Endothelial cell of umbilical vein (primary cell): ENCODE measurements at regions of chr3 and their contacts with region 1.

Region 1: DNA sequence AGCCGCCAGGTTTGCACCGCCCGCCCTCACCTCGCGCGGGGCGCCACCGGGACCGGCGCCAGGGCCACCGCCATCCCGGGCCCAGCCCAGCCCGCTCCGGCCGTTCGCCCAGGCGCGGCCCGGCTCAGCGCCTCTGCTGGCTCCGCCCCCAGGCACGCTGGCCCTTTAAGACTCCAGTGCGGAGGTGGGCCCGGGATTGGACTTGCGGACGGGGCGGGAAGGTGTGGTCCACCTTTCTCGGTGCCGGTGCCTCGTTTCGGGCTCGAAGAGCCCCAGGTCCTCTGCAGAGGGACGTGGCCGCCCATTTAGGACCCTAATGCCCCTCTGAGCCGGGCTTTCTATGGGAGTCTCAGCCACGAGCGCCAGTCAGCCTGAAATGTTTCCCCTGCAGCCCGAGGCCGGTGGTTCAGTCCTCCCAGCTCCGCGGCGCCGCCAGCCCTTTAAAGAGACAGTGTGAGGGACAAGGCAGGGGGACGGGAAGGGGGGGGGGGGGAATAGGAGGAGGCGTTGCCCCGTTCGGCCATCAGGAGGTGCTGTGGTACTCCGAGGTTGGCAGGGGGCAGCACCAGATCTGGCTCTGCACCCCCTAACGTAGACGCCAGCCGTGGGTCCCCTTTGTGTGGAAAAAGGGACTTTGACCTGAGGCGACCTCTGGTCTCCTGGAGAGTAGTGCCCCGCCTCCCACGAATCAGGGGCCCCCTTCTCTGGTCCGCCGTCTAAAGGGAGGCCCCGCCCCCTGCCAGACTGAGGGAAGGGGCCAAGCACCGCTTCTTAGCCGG is 1.0 kb downstream of the HYAL2 start:
- DNase-seq: peak; percentile 91
- H3K4me3 ChIP-seq: peak overlapping the region; percentile 65 to 89 (median 89)
- H3K27ac ChIP-seq: peak overlapping the region; percentile 99
- H3K4me1 ChIP-seq: peaks cover 63% of the 10 kb centered on the region
- H3K27me3 ChIP-seq: no peaks in the 10 kb centered on the region
- CTCF ChIP-seq: peak; percentile 41 to 82
- POLR2A ChIP-seq: no peak

Region 2: GRCh38 chr3:50163572-50164455 is 157.7 kb before region 1 on chr3:
- CTCF ChIA-PET with region 1: interaction called, 3 read pairs
- POLR2A ChIA-PET with region 1: no interaction called
- dilution Hi-C with region 1: no loop called
- intact Hi-C with region 1: loop called (anchors 2 kb)
- DNase-seq: peak; percentile 75
- H3K4me3 ChIP-seq: no peak overlapping the region
- H3K27ac ChIP-seq: peak overlapping the region; percentile 45
- H3K4me1 ChIP-seq: peaks cover 98% of the 10 kb centered on the region
- H3K27me3 ChIP-seq: no peaks in the 10 kb centered on the region
- CTCF ChIP-seq: no peak
- POLR2A ChIP-seq: peak; percentile 52

Region 3: DNA sequence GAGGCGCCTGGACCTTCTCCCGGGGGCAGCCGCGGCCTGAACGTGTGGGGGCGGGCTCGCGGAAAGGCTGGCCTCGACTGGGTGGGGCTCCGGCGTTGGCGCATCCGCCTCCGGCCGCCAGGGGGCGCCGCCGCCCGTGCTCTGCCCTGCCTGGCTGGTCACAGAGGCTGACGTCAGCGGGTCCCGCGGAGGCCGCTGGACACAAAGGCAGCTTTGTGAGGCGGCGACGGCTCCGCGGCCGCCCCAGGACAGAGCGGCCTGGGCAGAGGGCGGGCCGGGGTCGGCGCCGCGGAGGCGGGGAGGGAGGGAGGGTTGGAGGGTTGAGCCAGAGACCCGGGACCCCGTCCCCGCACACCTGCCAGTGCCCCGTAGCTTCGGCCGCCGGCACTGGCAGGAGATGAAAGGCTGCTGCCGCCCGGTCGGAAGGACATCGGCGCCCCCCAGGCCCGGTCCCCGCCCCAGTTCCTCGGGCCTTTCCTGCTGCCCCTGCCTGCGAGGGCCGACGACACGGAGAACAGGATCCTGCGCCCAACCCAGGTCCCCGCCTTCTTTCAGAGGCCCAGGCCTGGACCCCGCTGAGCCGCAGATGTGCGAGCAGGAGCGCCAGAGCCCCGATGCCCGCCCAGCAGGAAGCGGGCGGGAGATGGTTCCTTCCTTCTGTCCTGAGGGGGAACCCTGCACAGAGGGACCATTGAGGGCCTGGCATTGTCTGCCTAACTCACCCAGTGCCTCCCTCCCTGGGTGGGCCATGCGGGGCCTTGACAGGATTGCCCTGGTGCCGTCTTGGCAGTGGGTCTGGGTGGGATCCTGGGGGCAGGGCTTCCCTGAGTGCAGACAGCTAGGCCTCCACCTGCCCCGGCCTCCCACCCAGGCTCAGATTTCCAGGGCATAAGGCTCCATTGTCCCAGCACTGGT is 61.2 kb before region 1 on chr3:
- CTCF ChIA-PET with region 1: interaction called, 13 read pairs
- POLR2A ChIA-PET with region 1: interaction called, 7 read pairs
- dilution Hi-C with region 1: no loop called
- intact Hi-C with region 1: no loop called
- DNase-seq: peak; percentile 93
- H3K4me3 ChIP-seq: peak overlapping the region in 2 of 3 experiments; percentile 25 to 31
- H3K27ac ChIP-seq: peak overlapping the region; percentile 88
- H3K4me1 ChIP-seq: peaks cover 28% of the 10 kb centered on the region
- H3K27me3 ChIP-seq: no peaks in the 10 kb centered on the region
- CTCF ChIP-seq: peak; percentile 97 to 99
- POLR2A ChIP-seq: peak; percentile 88

Region 4: GRCh38 chr3:50292159-50293078 is 29.1 kb before region 1 on chr3 and contains the start of gene IFRD2:
- CTCF ChIA-PET with region 1: interaction called, 18 read pairs
- POLR2A ChIA-PET with region 1: no interaction called
- dilution Hi-C with region 1: no loop called
- intact Hi-C with region 1: loop called (anchors 1 kb)
- DNase-seq: peak; percentile 98
- H3K4me3 ChIP-seq: peak within 1 kb of the TSS; percentile 70 to 84 (median 76)
- H3K27ac ChIP-seq: peak within 1 kb of the TSS; percentile 53
- H3K4me1 ChIP-seq: peaks cover 11% of the 10 kb centered on the region
- H3K27me3 ChIP-seq: no peaks in the 10 kb centered on the region
- CTCF ChIP-seq: peak in 1 of 2 donors; percentile 6
- POLR2A ChIP-seq: peak; percentile 81
- total RNA-seq, gene IFRD2: 109 and 111 TPM in 2 replicates

Region 5: DNA sequence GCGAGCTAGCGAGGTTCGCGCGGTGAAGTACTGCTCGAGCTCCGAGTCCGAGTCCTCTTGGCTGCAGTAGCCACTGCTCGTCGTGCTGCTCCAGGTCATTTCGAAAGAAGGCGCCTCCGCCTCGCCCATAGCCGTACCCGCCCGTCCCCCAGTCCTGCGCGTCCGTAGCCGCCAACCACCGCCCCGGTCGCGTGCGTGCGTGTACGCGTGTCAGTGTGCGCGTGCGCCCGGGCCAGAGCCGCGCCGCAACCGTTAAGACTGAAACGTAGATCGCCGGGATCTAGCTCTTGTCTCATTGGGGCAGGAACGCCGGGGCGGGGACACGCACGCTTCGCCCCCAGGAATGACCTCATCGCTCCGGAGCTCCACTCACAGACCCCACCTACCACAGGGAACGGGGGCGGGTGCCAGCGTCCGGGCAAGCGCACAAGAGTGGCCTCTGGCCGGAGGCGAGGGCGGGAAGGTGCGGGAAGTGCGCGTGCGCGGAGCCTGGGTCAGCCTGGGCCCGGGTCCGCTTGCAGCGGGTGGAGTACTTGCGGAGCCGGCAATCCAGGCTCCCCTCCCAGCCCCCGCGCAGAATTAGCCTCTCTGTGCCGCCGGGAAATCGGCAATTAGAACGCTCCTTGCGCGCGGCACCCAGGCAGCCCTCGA is 15.8 kb after region 1 on chr3:
- CTCF ChIA-PET with region 1: interaction called, 66 read pairs
- POLR2A ChIA-PET with region 1: interaction called, 38 read pairs
- dilution Hi-C with region 1: no loop called
- intact Hi-C with region 1: loop called (anchors 1 kb)
- DNase-seq: peak; percentile 99
- H3K4me3 ChIP-seq: peak overlapping the region; percentile 85 to 93 (median 90)
- H3K27ac ChIP-seq: peak overlapping the region; percentile 95
- H3K4me1 ChIP-seq: peaks cover 43% of the 10 kb centered on the region
- H3K27me3 ChIP-seq: no peaks in the 10 kb centered on the region
- CTCF ChIP-seq: no peak
- POLR2A ChIP-seq: peak; percentile 63

Region 6: DNA sequence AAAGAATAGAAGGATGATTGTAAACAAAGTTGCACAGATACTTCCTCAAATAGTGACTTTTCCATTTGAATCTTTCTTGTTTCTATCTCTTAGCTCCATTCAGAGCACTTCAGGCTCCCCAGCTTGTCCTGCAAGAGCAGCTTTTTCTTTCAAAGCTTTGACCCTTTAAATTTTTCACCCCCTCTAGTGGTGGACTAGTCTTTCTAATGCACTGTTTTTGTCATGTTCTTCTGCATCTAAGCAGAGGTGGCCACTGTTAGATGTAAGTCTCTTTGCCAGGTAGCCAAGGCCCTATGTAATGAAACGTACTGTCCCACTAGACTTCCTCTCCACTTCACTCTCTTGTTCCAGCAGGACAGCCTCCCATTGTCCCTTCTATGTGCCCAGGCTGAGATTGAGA is 989.5 kb after region 1 on chr3:
- CTCF ChIA-PET with region 1: no interaction called
- POLR2A ChIA-PET with region 1: no interaction called
- dilution Hi-C with region 1: no loop called
- intact Hi-C with region 1: no loop called
- DNase-seq: peak; percentile 31
- H3K4me3 ChIP-seq: no peak overlapping the region
- H3K27ac ChIP-seq: no peak overlapping the region
- H3K4me1 ChIP-seq: no peaks in the 10 kb centered on the region
- H3K27me3 ChIP-seq: no peaks in the 10 kb centered on the region
- CTCF ChIP-seq: peak in 1 of 2 donors; percentile 32
- POLR2A ChIP-seq: no peak